ENCODE measurements at regions of chr14 and their contacts with region 1.

Region 1: DNA sequence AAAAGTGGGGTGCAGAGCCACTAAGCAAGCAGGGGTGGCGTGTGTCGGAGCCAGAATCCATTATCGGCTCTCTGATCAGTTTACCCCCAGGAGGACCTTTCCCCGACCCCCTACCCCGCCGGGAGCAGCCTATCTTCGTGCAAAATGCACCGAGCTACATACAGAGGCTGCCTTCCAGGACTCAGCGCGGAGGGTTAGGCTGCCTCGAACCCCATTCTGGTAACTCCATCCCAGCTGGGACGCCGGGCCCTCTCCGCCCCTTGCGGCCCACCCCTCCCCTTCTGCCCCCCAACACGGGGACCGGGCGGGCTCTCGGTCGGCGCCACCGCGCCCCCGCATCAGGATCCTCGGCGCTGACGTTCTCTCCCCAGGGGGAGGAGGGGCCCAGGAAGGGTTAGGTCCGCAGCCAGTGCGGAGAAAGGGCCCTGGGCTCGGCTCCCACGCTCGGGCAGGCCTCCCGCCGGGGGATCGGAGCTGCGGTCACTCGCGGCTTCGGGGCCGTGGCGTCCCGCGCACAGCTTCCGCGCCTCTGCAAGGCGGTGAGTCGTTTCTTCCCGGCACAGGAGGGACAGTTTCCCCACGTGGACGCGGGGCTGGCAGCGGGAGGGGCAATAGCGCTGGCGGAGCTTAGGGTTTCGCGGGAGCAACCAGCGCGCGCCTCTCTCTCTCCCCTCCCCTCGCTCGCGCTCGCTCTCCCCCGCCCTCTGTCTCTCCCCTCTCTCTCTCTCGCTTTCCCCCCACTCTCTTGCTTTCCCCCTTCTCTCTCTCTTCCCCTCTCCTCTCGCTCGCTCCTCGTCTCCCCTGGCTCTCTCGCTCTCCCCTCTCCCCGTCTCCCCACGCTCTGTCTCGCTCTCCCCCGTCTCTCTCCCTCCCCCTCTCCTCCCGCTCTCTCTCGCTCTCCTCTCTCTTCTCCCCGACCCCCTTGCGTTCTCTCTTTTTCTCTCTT is 12.5 kb upstream of the MAP3K9 start:
- DNase-seq: peak; percentile 50
- H3K4me3 Mint-ChIP-seq: peak overlapping the region; percentile 76
- H3K27ac Mint-ChIP-seq: peak overlapping the region; percentile 19
- H3K4me1 Mint-ChIP-seq: no peaks in the 10 kb centered on the region
- H3K27me3 Mint-ChIP-seq: no peaks in the 10 kb centered on the region
- CTCF ChIP-seq: no peak

Region 2: DNA sequence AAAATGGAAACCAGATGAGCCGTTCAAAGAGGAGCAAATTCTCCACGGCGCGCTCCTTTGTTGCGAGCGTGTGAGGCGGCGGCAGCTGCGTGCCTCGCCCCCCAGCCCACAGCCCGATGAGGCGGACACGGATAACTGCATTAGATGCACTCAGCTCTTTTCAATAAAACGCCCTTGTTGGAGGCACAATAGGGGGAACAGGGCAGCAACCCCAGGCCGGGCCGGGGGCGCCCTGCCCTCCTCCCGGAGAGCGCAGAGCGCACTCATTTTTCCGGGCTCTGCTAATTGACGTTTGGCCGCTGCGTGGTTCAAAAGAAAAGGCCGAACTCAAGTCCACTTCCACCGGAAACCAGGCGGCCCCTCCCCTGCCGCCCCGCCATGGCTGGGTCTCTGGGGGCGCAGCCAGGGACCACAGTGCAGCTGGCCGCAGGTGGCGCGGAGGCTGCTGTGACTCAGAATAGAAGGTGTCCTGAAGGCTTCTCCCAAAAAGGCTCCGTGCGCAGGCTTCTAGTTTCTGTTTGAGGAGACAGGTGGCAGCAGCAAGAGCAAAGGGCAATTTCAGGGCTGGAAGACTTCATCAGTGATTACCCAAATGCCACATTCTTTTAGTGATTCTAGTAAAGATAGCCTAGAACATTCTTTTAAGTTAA is 971.6 kb before region 1 on chr14:
- CTCF ChIA-PET with region 1: no interaction called
- POLR2A ChIA-PET with region 1: no interaction called
- intact Hi-C with region 1: no loop called
- DNase-seq: no peak
- H3K4me3 Mint-ChIP-seq: no peak overlapping the region
- H3K27ac Mint-ChIP-seq: no peak overlapping the region
- H3K4me1 Mint-ChIP-seq: no peaks in the 10 kb centered on the region
- H3K27me3 Mint-ChIP-seq: peaks cover 12% of the 10 kb centered on the region
- CTCF ChIP-seq: no peak

Region 3: GRCh38 chr14:70317969-70318634 is 503.8 kb before region 1 on chr14:
- CTCF ChIA-PET with region 1: no interaction called
- POLR2A ChIA-PET with region 1: no interaction called
- intact Hi-C with region 1: loop called (anchors 1 kb)
- DNase-seq: peak; percentile 63
- H3K4me3 Mint-ChIP-seq: no peak overlapping the region
- H3K27ac Mint-ChIP-seq: no peak overlapping the region
- H3K4me1 Mint-ChIP-seq: no peaks in the 10 kb centered on the region
- H3K27me3 Mint-ChIP-seq: no peaks in the 10 kb centered on the region
- CTCF ChIP-seq: peak; percentile 51

Region 4: DNA sequence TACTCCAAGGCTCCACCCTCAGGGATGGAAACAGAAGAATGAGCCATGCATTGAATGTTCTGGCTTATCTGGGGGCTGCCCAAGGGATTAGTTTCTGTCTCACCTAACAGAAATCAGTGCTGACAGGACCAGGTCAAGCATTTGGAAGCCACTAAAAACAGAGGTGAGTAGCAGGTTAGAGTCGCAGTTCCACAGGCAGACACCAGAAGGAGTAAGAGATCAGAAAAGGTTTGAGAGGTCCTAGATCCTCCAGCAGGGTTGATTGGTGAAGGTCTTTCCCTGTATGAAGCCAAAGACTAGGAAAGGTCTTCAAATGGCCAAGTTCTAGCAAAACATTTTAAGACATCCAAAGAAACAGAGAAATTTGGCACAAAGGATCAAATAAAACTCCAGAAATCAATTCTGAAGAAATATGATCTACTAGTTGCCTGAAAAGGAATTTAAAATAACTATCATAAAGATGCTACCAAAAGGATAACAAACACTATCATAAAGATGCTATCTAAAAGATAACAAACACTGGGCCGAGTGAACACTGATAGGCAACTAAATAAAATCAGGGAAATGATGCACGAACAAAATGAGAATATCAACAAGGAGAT is 199.6 kb before region 1 on chr14:
- CTCF ChIA-PET with region 1: interaction called, 42 read pairs
- POLR2A ChIA-PET with region 1: no interaction called
- intact Hi-C with region 1: loop called (anchors 1 kb)
- DNase-seq: peak; percentile 71
- H3K4me3 Mint-ChIP-seq: no peak overlapping the region
- H3K27ac Mint-ChIP-seq: no peak overlapping the region
- H3K4me1 Mint-ChIP-seq: no peaks in the 10 kb centered on the region
- H3K27me3 Mint-ChIP-seq: no peaks in the 10 kb centered on the region
- CTCF ChIP-seq: peak; percentile 76

Region 5: GRCh38 chr14:70832536-70833305 is 10.9 kb after region 1 on chr14:
- CTCF ChIA-PET with region 1: interaction called, 31 read pairs
- POLR2A ChIA-PET with region 1: interaction called, 7 read pairs
- intact Hi-C with region 1: no loop called
- DNase-seq: no peak
- H3K4me3 Mint-ChIP-seq: no peak overlapping the region
- H3K27ac Mint-ChIP-seq: no peak overlapping the region
- H3K4me1 Mint-ChIP-seq: no peaks in the 10 kb centered on the region
- H3K27me3 Mint-ChIP-seq: no peaks in the 10 kb centered on the region
- CTCF ChIP-seq: no peak

Region 6: GRCh38 chr14:70972107-70972976 is 150.5 kb after region 1 on chr14:
- CTCF ChIA-PET with region 1: interaction called, 40 read pairs
- POLR2A ChIA-PET with region 1: interaction called, 4 read pairs
- intact Hi-C with region 1: loop called (anchors 1 kb)
- DNase-seq: peak; percentile 88
- H3K4me3 Mint-ChIP-seq: no peak overlapping the region
- H3K27ac Mint-ChIP-seq: peak overlapping the region; percentile 53
- H3K4me1 Mint-ChIP-seq: peaks cover 8% of the 10 kb centered on the region
- H3K27me3 Mint-ChIP-seq: no peaks in the 10 kb centered on the region
- CTCF ChIP-seq: peak; percentile 81